ENCODE measurements at regions of chr3 and their contacts with region 1.

Region 1: DNA sequence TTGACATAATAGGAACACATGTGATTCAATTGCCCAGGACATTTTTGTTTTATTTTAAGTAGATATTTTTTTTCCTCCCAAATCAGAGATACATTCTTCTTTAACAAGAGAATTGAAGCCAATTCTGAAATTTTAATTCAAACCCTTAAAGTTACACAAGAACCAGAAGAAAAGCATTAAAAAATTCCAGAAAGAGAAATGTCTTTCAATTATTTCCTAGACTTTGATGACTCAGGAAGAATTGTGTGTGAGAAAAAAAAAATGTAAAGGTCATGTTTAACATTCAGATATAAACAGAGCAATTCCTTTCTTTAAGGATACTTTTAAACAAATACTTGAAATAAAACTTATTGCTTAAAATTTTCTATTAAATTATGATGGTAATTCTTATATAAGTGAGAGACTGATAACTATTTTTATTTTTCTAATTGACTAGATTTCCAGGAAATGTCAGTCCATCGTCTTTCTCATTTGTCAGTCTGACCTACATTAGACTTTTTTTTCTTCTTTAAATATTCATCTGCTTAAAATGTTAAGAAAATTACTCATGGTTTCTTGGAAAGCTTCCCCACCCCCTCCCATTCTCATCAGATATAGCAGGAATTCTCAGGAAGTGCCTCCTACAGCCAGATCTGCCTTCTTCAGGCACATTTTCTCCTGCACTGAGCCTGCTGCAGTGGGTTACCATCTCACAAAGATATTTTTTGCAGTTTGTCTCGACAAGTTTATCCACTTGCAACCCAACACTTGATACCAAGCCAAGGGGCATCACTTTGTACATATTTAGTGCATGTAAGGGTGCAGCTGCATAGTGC is 261.8 kb upstream of the CBLB start:
- DNase-seq: no peak
- ATAC-seq: no peak
- H3K4me3 ChIP-seq: no peak overlapping the region
- H3K27ac ChIP-seq: no peak overlapping the region
- H3K4me1 ChIP-seq: no peaks in the 10 kb centered on the region
- H3K27me3 ChIP-seq: no peaks in the 10 kb centered on the region
- CTCF ChIP-seq: no peak
- EP300 ChIP-seq: no peak
- POLR2A ChIP-seq: no peak
- RAD21 ChIP-seq: no peak

Region 2: GRCh38 chr3:105988540-105989212 is 141.9 kb before region 1 on chr3:
- CTCF ChIA-PET with region 1: no interaction called
- POLR2A ChIA-PET with region 1: no interaction called
- RAD21 ChIA-PET with region 1: no interaction called
- SMC1A ChIA-PET with region 1: no interaction called
- in situ Hi-C with region 1: no loop called
- intact Hi-C with region 1: no loop called
- DNase-seq: no peak
- ATAC-seq: no peak
- H3K4me3 ChIP-seq: no peak overlapping the region
- H3K27ac ChIP-seq: no peak overlapping the region
- H3K4me1 ChIP-seq: no peaks in the 10 kb centered on the region
- H3K27me3 ChIP-seq: no peaks in the 10 kb centered on the region
- CTCF ChIP-seq: no peak
- EP300 ChIP-seq: no peak
- POLR2A ChIP-seq: no peak
- RAD21 ChIP-seq: no peak

Region 3: DNA sequence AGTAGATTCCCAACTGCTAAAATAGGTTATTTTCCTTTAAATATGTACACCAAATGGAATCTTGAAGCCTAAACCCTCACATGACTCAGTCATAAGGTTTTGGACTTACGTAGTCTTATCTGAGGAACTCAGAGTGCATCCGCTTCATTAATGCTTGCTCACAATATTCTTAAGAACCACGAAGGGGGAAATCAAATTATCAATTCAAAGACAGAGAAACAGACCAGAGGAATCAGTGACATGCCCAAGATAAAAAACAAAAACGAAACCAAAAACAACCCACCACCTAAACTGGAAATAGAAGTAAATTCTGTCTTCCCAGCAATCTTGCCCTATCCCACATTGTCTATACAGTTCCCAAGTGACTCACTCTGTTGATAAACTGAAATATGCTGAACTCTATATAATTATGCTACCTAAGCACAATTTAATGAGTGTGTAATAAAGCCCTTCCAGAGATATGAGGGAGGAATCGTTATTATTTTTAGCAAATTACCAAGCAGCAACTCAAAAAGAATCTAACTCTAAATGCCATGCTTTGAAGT is 126.4 kb before region 1 on chr3:
- CTCF ChIA-PET with region 1: no interaction called
- POLR2A ChIA-PET with region 1: no interaction called
- RAD21 ChIA-PET with region 1: no interaction called
- SMC1A ChIA-PET with region 1: no interaction called
- in situ Hi-C with region 1: no loop called
- intact Hi-C with region 1: no loop called
- DNase-seq: no peak
- ATAC-seq: no peak
- H3K4me3 ChIP-seq: no peak overlapping the region
- H3K27ac ChIP-seq: no peak overlapping the region
- H3K4me1 ChIP-seq: no peaks in the 10 kb centered on the region
- H3K27me3 ChIP-seq: no peaks in the 10 kb centered on the region
- CTCF ChIP-seq: no peak
- EP300 ChIP-seq: no peak
- POLR2A ChIP-seq: no peak
- RAD21 ChIP-seq: no peak

Region 4: DNA sequence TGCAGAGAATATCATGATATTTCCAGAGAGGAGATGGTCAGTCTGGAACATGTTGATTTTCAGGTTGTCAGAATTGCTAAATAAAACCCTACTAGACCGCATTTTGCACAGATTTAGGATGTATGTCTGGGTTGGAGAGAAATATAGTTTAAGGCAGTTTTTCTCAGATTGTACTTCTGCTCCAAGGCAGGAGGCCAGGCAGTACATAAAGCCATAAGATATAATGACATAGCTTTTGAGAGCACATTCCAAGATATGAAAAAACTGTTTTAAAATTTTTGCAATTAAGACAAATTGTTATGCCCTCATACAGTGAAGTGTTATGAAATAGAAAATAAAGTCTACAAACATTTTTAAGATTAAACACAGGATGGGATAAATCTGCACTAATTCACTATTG is 40.0 kb after region 1 on chr3:
- CTCF ChIA-PET with region 1: interaction called, 3 read pairs
- POLR2A ChIA-PET with region 1: interaction called, 3 read pairs
- RAD21 ChIA-PET with region 1: no interaction called
- SMC1A ChIA-PET with region 1: interaction called, 10 read pairs
- in situ Hi-C with region 1: no loop called
- intact Hi-C with region 1: no loop called
- DNase-seq: no peak
- ATAC-seq: no peak
- H3K4me3 ChIP-seq: no peak overlapping the region
- H3K27ac ChIP-seq: no peak overlapping the region
- H3K4me1 ChIP-seq: peaks cover 24% of the 10 kb centered on the region
- H3K27me3 ChIP-seq: no peaks in the 10 kb centered on the region
- CTCF ChIP-seq: no peak
- EP300 ChIP-seq: no peak
- POLR2A ChIP-seq: no peak
- RAD21 ChIP-seq: no peak